Uterus (tissue), 4 donors: ENCODE measurements at regions of chr11 and their contacts with region 1.

Region 1: DNA sequence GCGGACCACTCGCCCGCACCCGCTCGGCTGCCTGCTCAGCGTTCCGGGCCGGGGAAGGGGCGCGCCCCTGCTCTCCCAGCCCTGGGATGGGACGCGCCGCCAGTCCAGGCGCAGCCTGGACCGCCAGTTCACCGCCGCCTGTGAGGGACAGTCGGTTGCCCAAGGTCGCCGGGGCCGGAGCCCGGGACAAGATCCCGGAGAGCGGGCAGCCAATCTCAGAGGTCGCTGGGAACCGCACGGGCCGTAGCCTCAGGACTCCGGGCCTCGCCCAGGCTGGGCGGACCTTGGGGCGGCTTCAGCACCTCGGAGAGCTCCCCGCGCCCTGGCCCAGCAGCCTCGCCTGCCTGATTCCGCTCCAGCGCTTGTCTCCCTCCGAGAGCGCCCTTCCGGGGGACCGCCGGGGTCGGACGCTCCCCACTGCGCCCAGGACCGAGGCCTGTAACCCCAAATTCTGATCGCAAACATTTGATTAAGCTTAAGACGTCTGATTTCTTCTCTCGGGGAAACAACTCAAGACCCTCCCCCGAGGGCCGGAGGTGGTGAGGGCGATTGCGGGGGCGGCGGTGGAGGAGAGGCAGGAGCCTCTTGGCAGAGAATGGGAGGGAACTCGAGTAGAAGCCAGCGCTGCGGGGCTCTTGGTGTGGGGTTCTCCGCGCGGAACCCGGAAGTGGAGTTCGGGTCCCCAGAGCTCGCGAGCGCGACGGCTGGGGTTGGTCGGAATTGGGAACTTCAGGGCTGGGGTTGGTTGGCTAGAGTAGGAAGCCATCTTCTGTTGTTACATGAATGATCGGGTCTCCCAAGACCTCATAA is 1.1 kb upstream of the CHRM4 start:
- DNase-seq: peak; percentile 68 to 86
- H3K4me3 ChIP-seq: no peak overlapping the region
- H3K27ac ChIP-seq: no peak overlapping the region
- H3K4me1 ChIP-seq: peaks cover 0 to 33% of the 10 kb centered on the region in 2 donors
- H3K27me3 ChIP-seq: peaks cover 19 to 22% of the 10 kb centered on the region in 2 donors
- CTCF ChIP-seq: no peak
- POLR2A ChIP-seq: no peak

Region 2: GRCh38 chr11:46547579-46547978 is 155.0 kb after region 1 on chr11:
- intact Hi-C with region 1: loop called (anchors 5 kb)
- DNase-seq: no peak
- H3K4me3 ChIP-seq: no peak overlapping the region
- H3K27ac ChIP-seq: no peak overlapping the region
- H3K4me1 ChIP-seq: peaks cover 0 to 6% of the 10 kb centered on the region in 2 donors
- H3K27me3 ChIP-seq: no peaks in the 10 kb centered on the region
- CTCF ChIP-seq: no peak
- POLR2A ChIP-seq: no peak